ENCODE measurements at regions of chr16 and their contacts with region 1.

Region 1: GRCh38 chr16:72093448-72094265 is at the starts of genes DHX38 and TXNL4B:
- DNase-seq: peak; percentile 99
- H3K4me3 ChIP-seq: peak within 1 kb of the TSS; percentile 91
- H3K27me3 ChIP-seq: no peaks in the 10 kb centered on the region
- CTCF ChIP-seq: no peak
- polyA plus RNA-seq, gene DHX38: 23.3 and 37.6 TPM in 2 replicates
- polyA plus RNA-seq, gene TXNL4B: 8.3 and 11.5 TPM in 2 replicates

Region 2: GRCh38 chr16:72066747-72067146 is 26.9 kb before region 1 on chr16:
- CTCF ChIA-PET with region 1: interaction called, 10 read pairs
- POLR2A ChIA-PET with region 1: no interaction called
- DNase-seq: no peak
- H3K4me3 ChIP-seq: no peak overlapping the region
- H3K27me3 ChIP-seq: no peaks in the 10 kb centered on the region
- CTCF ChIP-seq: peak; percentile 71

Region 3: DNA sequence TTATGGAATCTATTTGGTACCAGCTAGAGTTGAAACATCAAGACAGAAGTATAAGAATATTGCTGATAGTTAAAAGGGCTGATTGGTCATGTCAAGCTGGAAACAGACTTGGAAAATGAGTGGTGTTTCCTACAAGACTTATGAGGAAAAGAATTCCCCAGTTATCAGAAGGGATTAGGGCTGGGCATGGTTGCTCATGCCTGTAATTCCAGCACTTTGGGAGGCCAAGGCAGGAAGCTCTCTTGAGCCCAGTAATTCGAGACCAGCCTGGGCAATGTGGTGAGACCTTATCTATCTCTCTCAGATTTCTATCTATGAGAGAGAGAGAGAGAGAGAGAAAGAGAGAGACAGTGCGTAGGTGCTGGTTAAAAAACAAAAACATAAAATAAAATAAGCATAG is 217.8 kb after region 1 on chr16:
- CTCF ChIA-PET with region 1: no interaction called
- POLR2A ChIA-PET with region 1: no interaction called
- DNase-seq: no peak
- H3K4me3 ChIP-seq: no peak overlapping the region
- H3K27me3 ChIP-seq: no peaks in the 10 kb centered on the region
- CTCF ChIP-seq: no peak